GM12878 (cell line): ENCODE measurements at regions of chr2 and their contacts with region 1.

Region 1: GRCh38 chr2:161090411-161090810 is 69.8 kb upstream of the TANK start:
- DNase-seq: no peak
- ATAC-seq: peak; percentile 59
- H3K4me3 ChIP-seq: no peak overlapping the region
- H3K27ac ChIP-seq: peak overlapping the region; percentile 63
- H3K4me1 ChIP-seq: peaks cover 36% of the 10 kb centered on the region
- H3K27me3 ChIP-seq: no peaks in the 10 kb centered on the region
- CTCF ChIP-seq: no peak
- EP300 ChIP-seq: no peak
- POLR2A ChIP-seq: 0 out of 2 replicates have a peak, but pooled peaks have one; percentile 37
- RAD21 ChIP-seq: no peak

Region 2: GRCh38 chr2:161068670-161069069 is 21.7 kb before region 1 on chr2:
- CTCF ChIA-PET with region 1: interaction called, 47 read pairs
- POLR2A ChIA-PET with region 1: interaction called, 4 read pairs
- RAD21 ChIA-PET with region 1: interaction called, 10 read pairs
- SMC1A ChIA-PET with region 1: interaction called, 25 read pairs
- in situ Hi-C with region 1: no loop called
- intact Hi-C with region 1: no loop called
- DNase-seq: no peak
- ATAC-seq: peak; percentile 65
- H3K4me3 ChIP-seq: no peak overlapping the region
- H3K27ac ChIP-seq: no peak overlapping the region
- H3K4me1 ChIP-seq: no peaks in the 10 kb centered on the region; the same call in 1 of the 2 replicates
- H3K27me3 ChIP-seq: no peaks in the 10 kb centered on the region
- CTCF ChIP-seq: no peak
- EP300 ChIP-seq: no peak
- POLR2A ChIP-seq: no peak
- RAD21 ChIP-seq: no peak

Region 3: DNA sequence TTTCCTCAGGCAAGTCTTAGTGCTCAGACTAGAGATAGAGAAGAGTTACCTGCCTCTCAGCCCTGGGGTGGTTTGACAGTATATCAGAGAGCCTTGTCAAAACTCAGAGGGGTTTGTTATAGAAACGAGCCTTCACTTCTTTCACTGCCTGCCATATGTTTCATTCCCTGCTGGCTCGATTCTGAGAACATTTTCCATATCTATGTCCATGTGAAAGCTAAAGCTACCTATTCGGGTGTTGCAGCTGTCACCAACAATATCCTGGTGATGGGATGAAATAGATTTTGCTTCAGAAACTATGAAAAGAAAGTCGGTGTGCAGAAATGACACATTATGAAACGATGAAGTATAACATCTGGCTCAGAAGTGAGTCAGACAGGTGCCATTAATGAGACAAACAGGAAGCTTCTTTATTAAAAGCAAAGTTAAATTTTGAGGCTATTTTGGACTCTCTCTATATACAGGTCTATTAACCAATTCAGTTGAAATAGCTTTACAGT is 13.7 kb after region 1 on chr2:
- CTCF ChIA-PET with region 1: interaction called, 25 read pairs
- POLR2A ChIA-PET with region 1: interaction called, 65 read pairs
- RAD21 ChIA-PET with region 1: interaction called, 34 read pairs
- SMC1A ChIA-PET with region 1: interaction called, 138 read pairs
- in situ Hi-C with region 1: no loop called
- intact Hi-C with region 1: no loop called
- DNase-seq: peak; percentile 72
- ATAC-seq: peak; percentile 89
- H3K4me3 ChIP-seq: 0 out of 2 replicates have a peak overlapping the region, but pooled peaks have one; percentile 6
- H3K27ac ChIP-seq: peak overlapping the region; percentile 55
- H3K4me1 ChIP-seq: peaks cover 19% of the 10 kb centered on the region
- H3K27me3 ChIP-seq: no peaks in the 10 kb centered on the region
- CTCF ChIP-seq: no peak
- EP300 ChIP-seq: peak in 1 of 2 experiments; percentile 89; a peak in 3 of 4 replicates
- POLR2A ChIP-seq: no peak
- RAD21 ChIP-seq: peak; percentile 16; the same call in 1 of the 2 replicates

Region 4: GRCh38 chr2:161136696-161137324 is 46.4 kb after region 1 on chr2:
- CTCF ChIA-PET with region 1: interaction called, 5 read pairs
- POLR2A ChIA-PET with region 1: interaction called, 25 read pairs
- RAD21 ChIA-PET with region 1: interaction called, 27 read pairs
- SMC1A ChIA-PET with region 1: interaction called, 31 read pairs
- in situ Hi-C with region 1: no loop called
- intact Hi-C with region 1: loop called (anchors 1 kb)
- DNase-seq: peak; percentile 87
- ATAC-seq: peak; percentile 80
- H3K4me3 ChIP-seq: peak overlapping the region; percentile 81
- H3K27ac ChIP-seq: peak overlapping the region; percentile 95
- H3K4me1 ChIP-seq: no peaks in the 10 kb centered on the region
- H3K27me3 ChIP-seq: no peaks in the 10 kb centered on the region
- CTCF ChIP-seq: no peak
- EP300 ChIP-seq: no peak; a peak in 1 of 4 replicates
- POLR2A ChIP-seq: peak; percentile 56
- RAD21 ChIP-seq: no peak

Region 5: GRCh38 chr2:161160226-161161069 is 70.0 kb after region 1 on chr2 and contains the start of gene TANK:
- CTCF ChIA-PET with region 1: interaction called, 4 read pairs
- POLR2A ChIA-PET with region 1: interaction called, 5 read pairs
- RAD21 ChIA-PET with region 1: interaction called, 13 read pairs
- SMC1A ChIA-PET with region 1: interaction called, 10 read pairs
- in situ Hi-C with region 1: no loop called
- intact Hi-C with region 1: no loop called
- DNase-seq: peak; percentile 83
- ATAC-seq: peak; percentile 90
- H3K4me3 ChIP-seq: peak within 1 kb of the TSS; percentile 93
- H3K27ac ChIP-seq: peak within 1 kb of the TSS; percentile 89
- H3K4me1 ChIP-seq: peaks cover 25% of the 10 kb centered on the region
- H3K27me3 ChIP-seq: no peaks in the 10 kb centered on the region
- CTCF ChIP-seq: no peak
- EP300 ChIP-seq: no peak
- POLR2A ChIP-seq: peak; percentile 96
- RAD21 ChIP-seq: no peak
- polyA plus RNA-seq, gene TANK: 102 to 127 TPM

Region 6: GRCh38 chr2:161172901-161173540 is 82.6 kb after region 1 on chr2:
- CTCF ChIA-PET with region 1: no interaction called
- POLR2A ChIA-PET with region 1: interaction called, 5 read pairs
- RAD21 ChIA-PET with region 1: interaction called, 12 read pairs
- SMC1A ChIA-PET with region 1: interaction called, 5 read pairs
- in situ Hi-C with region 1: no loop called
- intact Hi-C with region 1: no loop called
- DNase-seq: no peak
- ATAC-seq: peak; percentile 70
- H3K4me3 ChIP-seq: peak overlapping the region; percentile 36; the same call in 1 of the 2 replicates
- H3K27ac ChIP-seq: peak overlapping the region; percentile 36
- H3K4me1 ChIP-seq: peaks cover 52% of the 10 kb centered on the region
- H3K27me3 ChIP-seq: no peaks in the 10 kb centered on the region
- CTCF ChIP-seq: no peak
- EP300 ChIP-seq: peak; percentile 8 to 35; a peak in 2 of 4 replicates
- POLR2A ChIP-seq: no peak
- RAD21 ChIP-seq: no peak

Region 7: GRCh38 chr2:161436411-161436810 is 346.0 kb after region 1 on chr2:
- CTCF ChIA-PET with region 1: no interaction called
- POLR2A ChIA-PET with region 1: no interaction called
- RAD21 ChIA-PET with region 1: no interaction called
- SMC1A ChIA-PET with region 1: no interaction called
- in situ Hi-C with region 1: no loop called
- intact Hi-C with region 1: no loop called
- DNase-seq: no peak
- ATAC-seq: no peak
- H3K4me3 ChIP-seq: no peak overlapping the region
- H3K27ac ChIP-seq: no peak overlapping the region
- H3K4me1 ChIP-seq: no peaks in the 10 kb centered on the region
- H3K27me3 ChIP-seq: no peaks in the 10 kb centered on the region
- CTCF ChIP-seq: no peak
- EP300 ChIP-seq: no peak
- POLR2A ChIP-seq: no peak
- RAD21 ChIP-seq: no peak

Region 8: DNA sequence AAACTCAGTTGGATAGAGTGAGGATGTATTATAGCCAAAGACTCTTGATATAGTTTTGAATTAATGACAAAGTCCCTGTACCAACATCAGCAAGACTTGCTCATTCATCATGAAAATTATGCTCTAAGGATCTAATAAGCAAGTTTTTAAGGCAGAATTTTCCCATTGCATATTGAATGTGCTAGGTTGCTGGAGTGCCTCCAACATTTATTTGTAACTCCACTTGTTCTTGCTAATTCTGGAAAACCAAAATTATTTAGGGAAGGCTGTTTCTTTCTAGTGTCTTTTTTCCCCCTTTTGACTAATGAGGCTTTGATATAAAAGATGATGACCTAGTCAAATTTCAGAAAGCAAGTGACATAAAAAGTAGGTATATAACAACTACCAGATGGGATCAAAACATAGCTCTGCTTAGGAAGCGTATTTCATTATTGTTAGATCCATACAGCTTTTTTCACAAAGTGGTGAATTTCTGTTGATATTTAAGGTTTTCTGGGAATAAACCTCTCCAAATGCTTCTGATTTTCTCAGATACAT is 541.5 kb after region 1 on chr2:
- CTCF ChIA-PET with region 1: no interaction called
- POLR2A ChIA-PET with region 1: no interaction called
- RAD21 ChIA-PET with region 1: no interaction called
- SMC1A ChIA-PET with region 1: no interaction called
- in situ Hi-C with region 1: no loop called
- intact Hi-C with region 1: no loop called
- DNase-seq: no peak
- ATAC-seq: no peak
- H3K4me3 ChIP-seq: no peak overlapping the region
- H3K27ac ChIP-seq: no peak overlapping the region
- H3K4me1 ChIP-seq: no peaks in the 10 kb centered on the region
- H3K27me3 ChIP-seq: no peaks in the 10 kb centered on the region
- CTCF ChIP-seq: no peak
- EP300 ChIP-seq: no peak
- POLR2A ChIP-seq: no peak
- RAD21 ChIP-seq: no peak